Pancreas (tissue), 10 donors: ENCODE measurements at regions of chr16 and their contacts with region 1.

Region 1: DNA sequence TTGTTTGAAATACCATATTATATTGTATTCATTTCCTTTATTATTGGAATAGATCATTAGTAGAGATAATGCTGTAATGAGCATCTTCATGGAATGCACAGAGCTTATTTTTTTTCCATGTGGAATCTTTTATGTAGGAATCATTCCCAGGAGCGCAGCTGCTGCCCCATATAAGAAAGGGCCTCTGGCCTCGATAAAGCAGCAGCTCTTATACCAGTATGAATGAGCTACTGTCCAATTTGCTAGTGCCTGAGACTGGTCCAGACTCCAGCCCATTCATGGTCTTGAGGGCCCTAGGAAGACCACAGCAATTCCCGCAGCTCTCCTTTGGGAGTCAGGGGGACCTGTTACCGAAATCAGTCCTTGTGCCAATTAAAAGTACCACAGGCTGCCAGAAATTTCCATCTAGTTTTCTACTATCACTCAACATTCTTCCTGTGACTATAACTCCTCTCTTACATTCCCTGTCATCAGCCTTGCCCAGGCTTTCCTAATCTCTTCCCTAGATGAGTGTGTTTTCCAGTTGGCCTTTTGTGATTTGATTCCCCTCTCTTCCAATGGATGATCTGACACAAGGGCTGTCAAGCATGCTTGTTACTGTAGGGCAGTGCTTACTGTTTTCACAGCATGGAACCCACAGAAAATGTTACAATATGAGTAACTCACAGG is 1.9 kb downstream of the ZNF843 start:
- DNase-seq: peak in 1 of 6 donors; percentile 9
- ATAC-seq: no peak
- H3K4me3 ChIP-seq: no peak overlapping the region
- H3K27ac ChIP-seq: no peak overlapping the region
- H3K4me1 ChIP-seq: no peaks in the 10 kb centered on the region
- H3K27me3 ChIP-seq: no peaks in the 10 kb centered on the region
- CTCF ChIP-seq: no peak

Region 2: DNA sequence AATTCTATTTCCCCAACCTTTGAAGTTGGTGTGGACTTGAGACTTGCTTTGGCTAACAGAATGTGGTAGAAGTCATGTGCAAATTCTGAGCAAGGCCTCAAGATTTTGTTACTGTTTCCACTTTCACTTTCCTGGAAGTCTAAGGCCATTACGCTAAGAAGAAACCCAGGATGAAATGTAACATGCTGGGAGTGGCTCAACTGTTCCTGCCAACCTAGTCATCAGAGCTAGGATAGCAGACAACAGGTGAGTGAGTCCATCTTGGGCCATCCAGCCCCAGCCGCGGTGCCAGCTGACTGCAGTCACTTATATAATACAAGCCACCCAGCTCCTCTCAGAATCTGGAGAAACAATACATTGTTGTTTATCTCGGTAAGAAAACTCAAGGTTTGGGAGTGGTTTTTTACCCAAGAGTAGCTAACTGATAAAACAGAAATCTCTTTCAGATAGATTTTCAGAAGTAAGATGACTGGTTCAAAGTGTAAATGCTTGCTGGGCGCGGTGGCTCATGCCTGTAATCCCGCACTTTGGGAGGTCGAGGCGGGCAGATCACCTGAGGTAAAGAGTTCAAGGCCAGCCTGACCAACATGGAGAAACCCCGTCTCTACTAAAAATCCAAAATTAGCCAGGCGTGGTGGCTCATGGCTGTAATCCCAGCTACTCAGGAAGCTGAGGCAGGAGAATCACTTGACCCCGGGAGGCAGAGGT is 418.0 kb before region 1 on chr16:
- intact Hi-C with region 1: no loop called
- DNase-seq: no peak
- ATAC-seq: no peak
- H3K4me3 ChIP-seq: no peak overlapping the region
- H3K27ac ChIP-seq: no peak overlapping the region
- H3K4me1 ChIP-seq: no peaks in the 10 kb centered on the region
- H3K27me3 ChIP-seq: no peaks in the 10 kb centered on the region
- CTCF ChIP-seq: no peak

Region 3: DNA sequence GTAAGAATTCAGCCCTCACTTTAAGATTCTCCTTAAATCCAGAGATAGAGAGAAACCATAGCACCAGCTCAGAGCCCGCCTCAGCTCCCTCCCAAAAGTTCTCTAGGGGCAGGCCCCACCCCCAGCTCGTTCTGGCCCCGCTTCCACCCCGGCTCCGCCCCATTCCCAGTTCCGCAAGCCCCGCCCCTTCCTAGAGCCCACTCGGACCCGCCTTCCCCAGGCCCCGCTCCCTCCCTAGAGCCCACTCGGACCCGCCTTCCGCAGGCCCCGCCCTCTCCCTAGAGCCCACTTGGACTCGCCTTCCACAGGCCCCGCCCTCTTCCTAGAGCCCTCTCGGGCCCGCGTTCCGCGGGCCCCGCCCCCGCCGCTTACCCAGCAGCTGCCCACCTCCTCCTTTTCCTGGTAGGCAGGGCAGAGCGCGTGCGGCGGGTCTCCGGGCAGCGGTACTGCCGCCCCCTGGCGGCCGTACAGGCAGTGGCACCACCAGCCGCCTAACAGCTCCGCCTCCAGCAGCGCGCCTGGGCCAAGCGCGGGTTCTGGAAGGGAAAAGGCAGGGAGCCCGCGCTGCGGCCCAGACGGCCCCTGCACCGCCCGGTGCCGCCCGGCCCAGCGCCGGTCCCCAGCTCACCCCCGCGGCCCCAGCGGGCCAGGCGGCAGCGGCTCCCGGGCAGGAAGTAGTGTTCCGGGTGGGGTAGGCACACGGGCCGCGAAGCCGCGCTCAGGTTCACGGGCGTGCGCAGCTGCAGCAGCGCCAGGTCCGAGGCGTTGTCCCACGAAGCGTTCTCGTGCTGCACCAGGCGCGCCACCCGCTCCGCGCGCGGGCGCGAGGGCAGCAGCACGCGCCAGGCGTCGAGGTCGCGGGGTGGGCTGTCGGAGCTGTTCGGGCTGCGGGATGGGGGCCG is 298.3 kb before region 1 on chr16:
- intact Hi-C with region 1: loop called in 1 of 3 experiments (anchors 10 kb)
- DNase-seq: peak; percentile 98 to 100 (median 99)
- ATAC-seq: peak; percentile 86 to 95 (median 91)
- H3K4me3 ChIP-seq: peak overlapping the region; percentile 13 to 48 (median 35)
- H3K27ac ChIP-seq: peak overlapping the region; percentile 71 to 91 (median 88)
- H3K4me1 ChIP-seq: peaks cover 18 to 30% (median 22%) of the 10 kb centered on the region in 3 donors
- H3K27me3 ChIP-seq: no peaks in the 10 kb centered on the region
- CTCF ChIP-seq: peak; percentile 91 to 97 (median 95)